OCI-LY7 (cell line): ENCODE measurements at regions of chr2 and their contacts with region 1.

Region 1: DNA sequence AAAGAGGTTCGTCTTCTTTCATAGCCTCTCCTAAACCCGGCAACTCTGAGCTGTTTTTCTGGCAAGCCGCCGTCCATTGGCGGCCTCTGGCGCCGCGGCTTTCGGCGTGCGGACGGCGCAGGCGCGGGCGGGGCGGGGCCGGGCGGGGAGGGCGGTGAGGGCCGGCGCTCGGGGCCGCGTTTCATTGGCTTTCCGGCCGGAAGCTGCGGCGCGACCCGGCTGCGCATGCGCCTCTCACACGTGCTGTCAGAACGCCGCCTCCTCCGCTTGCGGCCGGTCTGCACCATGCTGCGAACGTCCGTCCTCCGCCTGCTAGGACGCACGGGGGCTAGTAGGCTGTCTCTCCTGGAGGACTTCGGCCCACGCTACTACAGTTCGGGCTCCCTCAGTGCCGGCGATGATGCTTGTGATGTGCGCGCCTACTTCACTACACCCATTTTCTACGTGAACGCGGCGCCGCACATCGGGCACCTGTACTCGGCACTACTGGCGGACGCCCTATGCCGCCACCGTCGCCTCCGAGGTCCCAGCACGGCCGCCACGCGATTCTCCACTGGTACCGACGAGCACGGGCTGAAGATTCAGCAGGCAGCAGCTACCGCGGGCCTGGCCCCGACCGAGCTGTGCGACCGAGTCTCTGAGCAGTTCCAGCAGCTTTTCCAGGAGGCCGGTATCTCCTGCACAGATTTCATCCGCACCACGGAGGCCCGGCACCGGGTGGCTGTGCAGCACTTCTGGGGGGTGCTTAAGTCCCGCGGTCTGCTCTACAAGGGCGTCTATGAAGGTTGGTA is at the start of gene MARS2:
- DNase-seq: peak; percentile 95
- H3K4me3 ChIP-seq: peak within 1 kb of the TSS; percentile 90
- H3K27ac ChIP-seq: peak within 1 kb of the TSS; percentile 47
- H3K4me1 ChIP-seq: peaks cover 26% of the 10 kb centered on the region
- CTCF ChIP-seq: no peak
- total RNA-seq, gene MARS2: 23.2 and 32.7 TPM in 2 replicates

Region 2: DNA sequence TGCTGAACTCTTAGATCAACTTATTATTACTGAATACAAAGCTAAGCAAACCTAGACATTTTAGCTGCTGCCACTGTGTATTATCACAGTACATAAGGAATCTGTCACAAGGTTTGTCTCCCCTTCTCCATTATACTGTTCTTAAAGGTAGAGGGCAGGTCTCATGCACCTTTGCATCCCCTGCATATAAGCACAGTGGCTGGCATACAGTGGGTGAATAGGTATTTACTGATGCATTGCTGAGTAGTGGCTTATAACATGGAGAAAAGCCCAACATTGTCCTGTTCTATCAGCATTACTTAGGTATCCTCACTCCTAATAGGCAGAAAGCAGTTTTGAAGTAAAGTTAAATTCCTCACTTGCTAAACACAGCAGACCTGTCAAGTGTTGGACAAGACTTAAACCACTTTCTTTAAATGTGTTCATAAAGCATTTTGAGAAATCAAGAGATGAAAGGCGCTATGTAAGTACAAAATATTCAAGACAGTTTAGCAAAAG is 314.0 kb before region 1 on chr2:
- CTCF ChIA-PET with region 1: no interaction called
- POLR2A ChIA-PET with region 1: no interaction called
- intact Hi-C with region 1: loop called (anchors 5 kb)
- DNase-seq: no peak
- H3K4me3 ChIP-seq: no peak overlapping the region
- H3K27ac ChIP-seq: no peak overlapping the region
- H3K4me1 ChIP-seq: no peaks in the 10 kb centered on the region
- CTCF ChIP-seq: no peak

Region 3: GRCh38 chr2:197453161-197453914 is 252.0 kb before region 1 on chr2 and contains the start of gene COQ10B:
- CTCF ChIA-PET with region 1: no interaction called
- POLR2A ChIA-PET with region 1: no interaction called
- intact Hi-C with region 1: loop called (anchors 5 kb)
- DNase-seq: peak; percentile 100
- H3K4me3 ChIP-seq: peak within 1 kb of the TSS; percentile 84
- H3K27ac ChIP-seq: peak within 1 kb of the TSS; percentile 72
- H3K4me1 ChIP-seq: peaks cover 17% of the 10 kb centered on the region
- CTCF ChIP-seq: peak; percentile 55; the same call in 1 of the 2 replicates
- total RNA-seq, gene COQ10B: 4.5 and 5.0 TPM in 2 replicates

Region 4: DNA sequence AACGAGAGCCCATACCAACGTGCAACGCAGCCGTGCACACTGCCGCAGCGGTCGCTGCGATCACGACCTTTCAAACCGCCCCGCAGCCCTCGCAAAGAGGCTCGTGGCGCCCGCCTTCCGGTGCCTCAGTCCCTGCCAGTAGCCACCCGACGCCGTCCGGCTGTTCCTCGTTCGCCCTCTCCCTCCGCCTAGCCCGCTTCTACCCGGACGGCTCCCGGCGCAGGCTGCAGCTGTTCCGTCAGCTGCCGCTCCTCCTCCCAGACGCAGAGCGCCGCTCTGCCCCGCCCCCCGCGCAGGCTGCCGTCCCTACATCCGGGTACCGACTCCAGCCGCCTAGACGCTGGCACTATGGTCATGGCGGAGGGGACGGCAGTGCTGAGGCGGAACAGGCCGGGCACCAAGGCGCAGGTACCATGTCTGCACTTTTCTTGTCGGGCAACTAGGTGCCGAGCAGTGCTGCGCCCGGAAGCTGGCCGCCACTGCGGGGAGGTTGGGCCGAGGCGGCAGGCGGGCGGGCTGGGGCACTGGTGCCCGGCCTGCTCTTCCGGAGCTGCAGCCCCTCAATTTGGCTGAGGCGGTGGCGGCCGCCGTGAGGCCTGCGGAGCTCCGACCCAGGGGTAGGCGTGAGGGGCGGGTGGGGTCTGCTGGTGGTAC is 189.4 kb before region 1 on chr2 and contains the start of gene MOB4:
- CTCF ChIA-PET with region 1: no interaction called
- POLR2A ChIA-PET with region 1: no interaction called
- intact Hi-C with region 1: loop called (anchors 2 kb)
- DNase-seq: peak; percentile 96
- H3K4me3 ChIP-seq: peak within 1 kb of the TSS; percentile 89
- H3K27ac ChIP-seq: peak within 1 kb of the TSS; percentile 96
- H3K4me1 ChIP-seq: peaks cover 28% of the 10 kb centered on the region
- CTCF ChIP-seq: no peak
- total RNA-seq, gene MOB4: 23.0 and 27.6 TPM in 2 replicates

Region 5: GRCh38 chr2:197985029-197985638 is 279.8 kb after region 1 on chr2:
- CTCF ChIA-PET with region 1: no interaction called
- POLR2A ChIA-PET with region 1: no interaction called
- intact Hi-C with region 1: no loop called
- DNase-seq: no peak
- H3K4me3 ChIP-seq: no peak overlapping the region
- H3K27ac ChIP-seq: no peak overlapping the region
- H3K4me1 ChIP-seq: no peaks in the 10 kb centered on the region
- CTCF ChIP-seq: no peak